Ascending aorta (tissue), 2 donors: ENCODE measurements at regions of chr13 and their contacts with region 1.

Region 1: GRCh38 chr13:92716749-92717148 is 509.9 kb upstream of the GPC6 start:
- DNase-seq: no peak
- H3K4me3 ChIP-seq: no peak overlapping the region
- H3K27ac ChIP-seq: no peak overlapping the region
- H3K4me1 ChIP-seq: no peaks in the 10 kb centered on the region
- H3K27me3 ChIP-seq: no peaks in the 10 kb centered on the region
- CTCF ChIP-seq: peak in 2 of 3 experiments; percentile 28 to 32

Region 2: DNA sequence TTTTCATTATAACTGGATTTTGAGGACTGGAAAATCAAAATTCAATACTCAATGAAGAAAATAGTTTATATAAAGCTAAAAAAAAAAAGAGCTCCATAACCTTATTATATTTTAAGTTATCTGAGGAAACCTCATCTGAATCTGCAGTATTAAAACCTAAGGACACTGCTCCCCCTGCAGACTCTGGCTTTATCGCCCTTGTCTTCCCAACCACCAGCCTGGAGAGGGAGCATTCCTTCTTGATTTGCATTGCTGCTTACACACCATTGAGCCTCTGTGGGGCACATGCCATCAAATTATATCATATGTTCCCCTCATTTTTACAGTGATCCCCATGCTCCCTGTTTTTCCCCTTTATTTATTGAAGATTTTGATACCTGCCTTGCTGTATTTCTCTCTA is 361.5 kb before region 1 on chr13:
- intact Hi-C with region 1: no loop called
- DNase-seq: no peak
- H3K4me3 ChIP-seq: no peak overlapping the region
- H3K27ac ChIP-seq: no peak overlapping the region
- H3K4me1 ChIP-seq: no peaks in the 10 kb centered on the region
- H3K27me3 ChIP-seq: no peaks in the 10 kb centered on the region
- CTCF ChIP-seq: no peak

Region 3: GRCh38 chr13:92403606-92404005 is 313.1 kb before region 1 on chr13:
- intact Hi-C with region 1: no loop called
- DNase-seq: no peak
- H3K4me3 ChIP-seq: no peak overlapping the region
- H3K27ac ChIP-seq: no peak overlapping the region
- H3K4me1 ChIP-seq: no peaks in the 10 kb centered on the region
- H3K27me3 ChIP-seq: no peaks in the 10 kb centered on the region
- CTCF ChIP-seq: no peak

Region 4: DNA sequence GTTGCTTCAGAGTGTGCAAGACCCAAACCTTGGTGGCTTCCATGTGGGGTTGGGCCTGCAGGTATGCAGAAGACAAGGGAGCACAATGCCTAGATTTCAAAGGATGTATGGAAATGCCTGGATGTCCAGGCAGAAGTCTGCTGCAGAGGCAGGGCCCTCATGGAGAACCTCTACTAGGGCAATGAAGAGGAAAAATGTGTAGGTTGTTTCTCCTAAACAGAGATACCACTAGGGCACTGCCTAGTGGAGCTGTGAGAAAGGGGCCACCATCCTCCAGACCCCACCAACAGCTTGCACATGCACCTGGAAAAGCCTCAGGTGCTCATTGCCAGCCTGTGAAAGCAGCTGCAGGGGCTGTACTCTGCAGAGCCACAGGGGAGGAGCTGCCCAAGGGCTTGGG is 22.7 kb before region 1 on chr13:
- intact Hi-C with region 1: no loop called
- DNase-seq: no peak
- H3K4me3 ChIP-seq: no peak overlapping the region
- H3K27ac ChIP-seq: no peak overlapping the region
- H3K4me1 ChIP-seq: no peaks in the 10 kb centered on the region
- H3K27me3 ChIP-seq: no peaks in the 10 kb centered on the region
- CTCF ChIP-seq: no peak

Region 5: GRCh38 chr13:94362411-94362909 is 1645.7 kb after region 1 on chr13:
- intact Hi-C with region 1: loop called (anchors 2 kb)
- DNase-seq: peak in 1 of 2 donors; percentile 78
- H3K4me3 ChIP-seq: no peak overlapping the region
- H3K27ac ChIP-seq: no peak overlapping the region
- H3K4me1 ChIP-seq: peaks cover 0 to 5% of the 10 kb centered on the region in 2 donors
- H3K27me3 ChIP-seq: no peaks in the 10 kb centered on the region
- CTCF ChIP-seq: peak; percentile 62 to 79 (median 70)